ENCODE measurements at regions of chr10 and their contacts with region 1.

Region 1: GRCh38 chr10:93993782-93994437 is at the start of gene PLCE1:
- DNase-seq: peak; percentile 57 to 86 (median 82)
- ATAC-seq: peak; percentile 84 to 89
- H3K4me3 ChIP-seq: peak within 1 kb of the TSS; percentile 85
- H3K27ac ChIP-seq: peak within 1 kb of the TSS; percentile 69
- H3K4me1 ChIP-seq: peaks cover 10% of the 10 kb centered on the region
- H3K27me3 ChIP-seq: no peaks in the 10 kb centered on the region
- total RNA-seq, gene PLCE1: 12.4 to 23.4 (median 21.0) TPM

Region 2: DNA sequence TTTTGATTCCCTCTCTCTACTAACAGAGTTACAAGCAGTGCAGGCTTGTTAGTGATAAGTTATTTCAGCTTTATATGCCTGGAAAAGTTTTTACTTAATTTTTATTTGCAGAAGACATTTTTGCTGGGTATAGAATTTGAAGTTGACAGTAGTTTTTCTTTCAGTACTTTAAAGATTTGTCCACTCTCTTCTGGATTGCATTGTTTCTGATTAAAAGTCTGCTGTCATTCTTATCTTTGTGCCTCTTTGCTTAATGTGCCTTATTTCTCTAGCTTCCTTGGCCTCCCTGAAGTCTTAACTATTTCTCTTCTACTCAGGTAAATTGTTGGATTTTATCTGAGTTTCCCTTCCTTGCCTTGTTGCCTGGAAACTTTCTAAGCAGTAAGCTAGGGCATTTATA is 36.0 kb after region 1 on chr10:
- intact Hi-C with region 1: loop called in 1 of 4 experiments (anchors 2 kb)
- DNase-seq: no peak
- ATAC-seq: no peak
- H3K4me3 ChIP-seq: no peak overlapping the region
- H3K27ac ChIP-seq: no peak overlapping the region
- H3K4me1 ChIP-seq: no peaks in the 10 kb centered on the region
- H3K27me3 ChIP-seq: no peaks in the 10 kb centered on the region

Region 3: GRCh38 chr10:94076321-94076841 is 82.5 kb after region 1 on chr10:
- intact Hi-C with region 1: loop called in 1 of 4 experiments (anchors 10 kb)
- DNase-seq: peak in 1 of 3 donors; percentile 57
- ATAC-seq: peak; percentile 79 to 83
- H3K4me3 ChIP-seq: no peak overlapping the region
- H3K27ac ChIP-seq: no peak overlapping the region
- H3K4me1 ChIP-seq: no peaks in the 10 kb centered on the region
- H3K27me3 ChIP-seq: no peaks in the 10 kb centered on the region

Region 4: DNA sequence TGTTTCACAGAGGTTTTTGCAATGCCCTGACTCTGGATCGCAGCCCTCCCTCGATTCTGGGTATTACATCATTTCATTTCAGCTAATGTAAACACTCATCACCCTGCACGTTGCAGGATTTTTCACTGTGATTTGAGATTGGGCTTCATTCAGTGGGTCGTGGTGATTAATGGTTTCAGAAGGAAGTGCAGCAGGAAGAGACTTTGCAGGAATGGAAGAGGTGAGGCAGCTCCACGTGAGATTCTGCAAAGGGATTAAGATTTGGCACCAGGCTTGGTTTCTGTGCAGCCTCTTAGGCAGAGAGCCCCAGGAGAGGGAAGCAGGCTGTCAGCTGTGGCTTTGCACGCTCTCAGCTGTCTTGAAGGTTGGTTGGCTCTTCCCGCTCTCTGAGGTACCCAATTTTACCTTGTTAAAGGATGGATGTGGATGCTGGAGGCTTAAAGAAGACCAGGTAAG is 95.0 kb after region 1 on chr10:
- intact Hi-C with region 1: no loop called
- DNase-seq: no peak
- ATAC-seq: peak; percentile 47 to 68
- H3K4me3 ChIP-seq: no peak overlapping the region
- H3K27ac ChIP-seq: no peak overlapping the region
- H3K4me1 ChIP-seq: peaks cover 3% of the 10 kb centered on the region
- H3K27me3 ChIP-seq: no peaks in the 10 kb centered on the region